Panc1 (cell line): ENCODE measurements at regions of chr12 and their contacts with region 1.

Region 1: GRCh38 chr12:12696562-12697383 is 790 bp upstream of the GPR19 start:
- DNase-seq: no peak
- ATAC-seq: peak; percentile 85
- H3K4me3 ChIP-seq: peak overlapping the region; percentile 51 to 90
- H3K27ac ChIP-seq: peak overlapping the region; percentile 93
- H3K4me1 ChIP-seq: peaks cover 7% of the 10 kb centered on the region; the same call in 1 of the 2 replicates
- H3K27me3 ChIP-seq: no peaks in the 10 kb centered on the region
- CTCF ChIP-seq: no peak

Region 2: DNA sequence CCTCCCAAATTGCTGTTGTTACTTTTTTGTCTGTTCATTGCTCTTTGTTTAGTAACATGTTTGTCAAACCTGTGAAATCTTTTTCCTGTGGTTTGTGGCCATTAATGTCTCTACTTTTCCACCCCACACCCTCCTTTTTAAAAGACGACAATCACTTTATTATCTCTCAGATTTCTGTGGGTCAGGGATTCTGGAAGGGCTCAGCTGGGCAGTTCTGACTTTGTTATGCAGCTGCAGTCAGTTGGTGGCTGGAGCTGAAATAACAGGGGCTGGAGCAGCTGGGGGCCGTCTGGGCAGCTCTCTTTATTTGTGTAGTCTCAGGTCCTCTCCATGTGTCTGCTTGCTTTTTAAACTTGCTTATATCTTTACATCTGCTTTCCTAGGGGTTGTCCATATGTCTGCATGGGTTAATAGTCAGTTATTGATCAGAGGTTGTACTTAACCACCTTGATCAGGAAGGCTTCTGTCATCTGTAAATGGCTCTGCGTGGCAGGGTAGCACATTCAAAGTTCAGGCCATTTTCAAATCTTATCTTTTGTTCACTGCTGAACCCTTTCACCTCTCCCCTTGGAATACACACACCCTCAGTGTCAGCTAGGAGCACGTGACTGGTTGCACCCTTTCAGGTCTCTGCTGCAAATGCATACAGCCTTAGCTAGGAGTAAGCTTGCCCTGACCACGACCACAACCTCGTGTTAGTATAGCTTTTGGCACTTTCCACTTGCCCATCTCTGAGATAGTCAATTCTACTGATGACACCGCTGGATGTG is 312.0 kb before region 1 on chr12:
- CTCF ChIA-PET with region 1: no interaction called
- POLR2A ChIA-PET with region 1: no interaction called
- in situ Hi-C with region 1: no loop called
- intact Hi-C with region 1: no loop called
- DNase-seq: no peak
- ATAC-seq: no peak
- H3K4me3 ChIP-seq: no peak overlapping the region
- H3K27ac ChIP-seq: no peak overlapping the region
- H3K4me1 ChIP-seq: no peaks in the 10 kb centered on the region
- H3K27me3 ChIP-seq: no peaks in the 10 kb centered on the region
- CTCF ChIP-seq: no peak

Region 3: DNA sequence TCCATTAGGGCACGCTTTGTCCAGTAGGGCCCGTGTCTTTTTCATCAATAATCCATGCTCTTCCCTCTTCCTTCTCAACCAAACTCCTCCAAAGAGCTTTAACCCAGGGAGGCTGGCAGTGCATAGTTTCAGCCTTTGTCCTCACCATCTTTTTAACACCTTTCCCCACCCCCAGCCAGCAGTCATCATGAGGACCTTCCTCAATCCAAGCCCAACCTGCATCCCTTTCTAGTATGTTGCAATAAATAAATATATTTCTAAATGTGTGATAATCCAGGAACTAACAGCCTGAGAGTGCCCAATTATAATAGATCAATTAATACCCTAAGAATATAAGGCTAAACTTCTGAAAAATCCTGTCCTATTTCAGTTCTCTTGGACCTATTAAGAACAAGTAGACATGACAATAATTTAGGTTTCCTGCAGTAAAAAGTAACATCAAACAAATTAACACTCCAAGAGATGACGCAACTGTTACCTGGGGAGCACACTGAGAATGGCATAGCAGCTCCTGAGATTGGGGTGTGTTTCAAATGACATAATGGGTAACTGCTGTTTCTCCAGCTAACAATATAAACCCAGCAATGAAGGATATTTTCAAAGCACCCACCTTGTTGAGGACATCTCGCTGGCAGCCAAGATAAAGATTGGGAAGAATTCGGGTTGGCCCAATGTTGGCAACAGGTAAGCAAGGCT is 196.7 kb before region 1 on chr12:
- CTCF ChIA-PET with region 1: no interaction called
- POLR2A ChIA-PET with region 1: interaction called, 20 read pairs
- in situ Hi-C with region 1: no loop called
- intact Hi-C with region 1: no loop called
- DNase-seq: no peak
- ATAC-seq: no peak
- H3K4me3 ChIP-seq: no peak overlapping the region
- H3K27ac ChIP-seq: no peak overlapping the region
- H3K4me1 ChIP-seq: no peaks in the 10 kb centered on the region
- H3K27me3 ChIP-seq: no peaks in the 10 kb centered on the region
- CTCF ChIP-seq: no peak

Region 4: DNA sequence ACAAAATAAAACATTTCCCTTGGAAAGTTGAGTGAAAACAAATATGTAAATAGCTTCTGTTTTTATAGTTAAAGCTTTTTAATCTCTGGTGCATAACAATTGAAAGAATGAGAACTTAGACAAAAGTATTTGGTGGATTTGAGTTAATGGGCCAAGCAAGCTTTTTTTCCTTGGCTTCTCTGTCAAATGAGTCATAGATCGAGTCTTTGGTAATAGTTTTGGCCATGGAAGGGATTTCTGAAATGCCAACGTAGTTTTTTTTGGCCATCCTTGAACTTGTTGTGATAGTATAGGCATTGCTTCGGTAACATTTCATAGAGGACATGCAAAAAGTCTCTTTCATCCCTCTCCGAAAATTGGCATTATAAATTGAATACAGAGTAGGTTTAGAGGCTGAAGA is 35.7 kb before region 1 on chr12:
- CTCF ChIA-PET with region 1: interaction called, 10 read pairs
- POLR2A ChIA-PET with region 1: no interaction called
- in situ Hi-C with region 1: no loop called
- intact Hi-C with region 1: no loop called
- DNase-seq: no peak
- ATAC-seq: no peak
- H3K4me3 ChIP-seq: no peak overlapping the region
- H3K27ac ChIP-seq: no peak overlapping the region
- H3K4me1 ChIP-seq: no peaks in the 10 kb centered on the region
- H3K27me3 ChIP-seq: no peaks in the 10 kb centered on the region
- CTCF ChIP-seq: no peak

Region 5: GRCh38 chr12:12749433-12749832 is 52.7 kb after region 1 on chr12:
- CTCF ChIA-PET with region 1: no interaction called
- POLR2A ChIA-PET with region 1: no interaction called
- in situ Hi-C with region 1: no loop called
- intact Hi-C with region 1: no loop called
- DNase-seq: no peak
- ATAC-seq: peak; percentile 73
- H3K4me3 ChIP-seq: peak overlapping the region; percentile 34 to 53
- H3K27ac ChIP-seq: peak overlapping the region; percentile 79
- H3K4me1 ChIP-seq: peaks cover 35% of the 10 kb centered on the region
- H3K27me3 ChIP-seq: no peaks in the 10 kb centered on the region
- CTCF ChIP-seq: no peak

Region 6: GRCh38 chr12:13023811-13024530 is 327.2 kb after region 1 on chr12:
- CTCF ChIA-PET with region 1: no interaction called
- POLR2A ChIA-PET with region 1: no interaction called
- in situ Hi-C with region 1: no loop called
- intact Hi-C with region 1: no loop called
- DNase-seq: no peak
- ATAC-seq: peak; percentile 92
- H3K4me3 ChIP-seq: no peak overlapping the region
- H3K27ac ChIP-seq: no peak overlapping the region
- H3K4me1 ChIP-seq: no peaks in the 10 kb centered on the region; the same call in 1 of the 2 replicates
- H3K27me3 ChIP-seq: no peaks in the 10 kb centered on the region
- CTCF ChIP-seq: peak; percentile 72